ENCODE measurements at regions of chr20 and their contacts with region 1.

Region 1: DNA sequence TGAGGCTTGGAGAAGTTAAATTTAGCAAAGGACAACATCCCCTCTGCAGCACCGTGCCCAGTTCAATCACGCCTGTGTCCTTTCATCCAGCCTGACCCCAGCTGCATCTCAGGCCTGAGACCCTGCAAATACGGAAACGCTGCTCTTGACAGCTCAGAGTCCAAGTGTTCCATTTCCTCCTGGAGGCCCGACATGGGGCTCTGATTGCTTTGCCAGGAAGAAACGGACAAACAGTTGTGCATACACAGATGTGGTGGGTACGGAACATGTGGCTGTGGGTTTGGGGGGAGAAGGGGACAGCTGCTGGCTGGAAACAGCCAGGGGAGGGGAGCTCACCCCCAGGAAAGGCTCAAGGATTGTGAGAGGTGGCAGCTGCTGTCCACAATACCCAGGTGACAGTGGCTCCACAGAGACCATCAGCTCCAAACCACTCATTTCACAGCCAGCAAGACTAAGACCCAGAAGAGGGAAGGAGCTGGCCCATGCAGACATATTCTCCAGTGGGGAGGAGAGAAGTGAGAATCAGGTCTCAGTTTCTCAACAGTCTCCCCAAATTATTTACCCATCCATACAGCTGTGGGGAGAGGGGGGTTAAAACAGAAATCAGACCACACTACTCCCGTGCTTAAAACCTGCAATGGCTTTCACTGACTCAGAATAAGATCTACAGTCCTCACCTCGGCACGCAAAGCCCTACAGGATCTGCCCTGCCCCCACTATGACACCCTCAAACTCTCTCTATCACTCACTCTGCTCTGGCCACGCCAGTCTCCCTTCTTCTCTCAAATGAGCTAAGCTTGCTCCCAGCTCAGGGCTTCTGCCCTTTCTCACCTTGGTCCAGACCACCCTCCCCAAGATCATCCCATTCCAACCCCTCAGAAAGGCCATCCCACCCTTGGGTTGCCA is 89.1 kb downstream of the PREX1 start:
- DNase-seq: peak; percentile 92
- ATAC-seq: peak; percentile 83
- H3K4me3 ChIP-seq: peak overlapping the region; percentile 41; the same call in 1 of the 2 replicates
- H3K27ac ChIP-seq: peak overlapping the region; percentile 95
- H3K4me1 ChIP-seq: peaks cover 54% of the 10 kb centered on the region
- H3K27me3 ChIP-seq: no peaks in the 10 kb centered on the region
- CTCF ChIP-seq: no peak
- EP300 ChIP-seq: peak; percentile 99
- POLR2A ChIP-seq: no peak
- RAD21 ChIP-seq: peak; percentile 17; the same call in 1 of the 2 replicates

Region 2: DNA sequence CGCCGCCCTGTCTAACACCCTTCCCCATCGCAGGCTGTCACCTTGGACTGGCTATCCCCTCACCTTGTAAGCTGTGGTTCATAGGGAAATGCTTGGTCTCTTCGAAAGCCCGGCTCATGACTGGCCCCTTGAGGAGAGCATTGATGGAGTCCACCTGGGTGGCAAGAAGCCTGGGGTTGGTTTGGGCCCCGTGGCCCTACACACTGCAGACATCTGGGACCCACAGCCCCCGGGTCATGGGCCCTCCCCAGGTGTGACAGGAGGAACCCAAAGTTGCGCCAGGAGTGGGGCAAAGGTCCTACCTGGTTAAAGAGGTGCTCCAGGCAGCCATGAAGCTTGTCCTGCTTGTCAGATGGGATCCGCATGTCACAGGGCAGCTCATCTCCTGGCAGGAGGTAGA is 96.5 kb before region 1 on chr20:
- CTCF ChIA-PET with region 1: no interaction called
- POLR2A ChIA-PET with region 1: no interaction called
- RAD21 ChIA-PET with region 1: no interaction called
- SMC1A ChIA-PET with region 1: no interaction called
- in situ Hi-C with region 1: no loop called
- intact Hi-C with region 1: no loop called
- DNase-seq: no peak
- ATAC-seq: no peak
- H3K4me3 ChIP-seq: no peak overlapping the region
- H3K27ac ChIP-seq: no peak overlapping the region
- H3K4me1 ChIP-seq: no peaks in the 10 kb centered on the region
- H3K27me3 ChIP-seq: no peaks in the 10 kb centered on the region
- CTCF ChIP-seq: no peak
- EP300 ChIP-seq: no peak
- POLR2A ChIP-seq: no peak; the same call in 1 of the 2 replicates
- RAD21 ChIP-seq: no peak

Region 3: DNA sequence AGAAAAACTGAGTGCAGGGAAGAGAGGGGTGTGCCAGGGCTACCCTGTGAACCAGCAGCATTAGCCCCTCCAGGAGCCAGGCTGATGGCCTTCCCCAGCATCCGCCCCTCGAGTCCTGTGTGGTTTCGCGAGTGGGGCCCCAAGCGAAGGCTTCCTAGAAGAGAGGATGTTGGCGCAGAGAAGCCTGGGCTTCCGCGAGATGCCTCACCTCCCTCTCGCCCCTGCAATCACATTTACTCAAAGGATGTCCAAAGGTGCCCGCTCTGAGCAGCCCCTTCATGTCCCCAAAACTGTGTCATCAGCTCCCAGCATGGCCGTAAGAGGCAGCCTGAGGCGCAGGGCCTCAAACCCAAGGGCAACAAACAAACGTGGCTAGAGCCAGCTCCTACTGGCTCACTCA is 22.6 kb before region 1 on chr20:
- CTCF ChIA-PET with region 1: interaction called, 13 read pairs
- POLR2A ChIA-PET with region 1: interaction called, 7 read pairs
- RAD21 ChIA-PET with region 1: interaction called, 25 read pairs
- SMC1A ChIA-PET with region 1: interaction called, 141 read pairs
- in situ Hi-C with region 1: no loop called
- intact Hi-C with region 1: loop called (anchors 2 kb)
- DNase-seq: no peak
- ATAC-seq: no peak
- H3K4me3 ChIP-seq: no peak overlapping the region
- H3K27ac ChIP-seq: peak overlapping the region; percentile 87
- H3K4me1 ChIP-seq: peaks cover 84% of the 10 kb centered on the region
- H3K27me3 ChIP-seq: no peaks in the 10 kb centered on the region
- CTCF ChIP-seq: no peak
- EP300 ChIP-seq: no peak
- POLR2A ChIP-seq: no peak
- RAD21 ChIP-seq: no peak

Region 4: DNA sequence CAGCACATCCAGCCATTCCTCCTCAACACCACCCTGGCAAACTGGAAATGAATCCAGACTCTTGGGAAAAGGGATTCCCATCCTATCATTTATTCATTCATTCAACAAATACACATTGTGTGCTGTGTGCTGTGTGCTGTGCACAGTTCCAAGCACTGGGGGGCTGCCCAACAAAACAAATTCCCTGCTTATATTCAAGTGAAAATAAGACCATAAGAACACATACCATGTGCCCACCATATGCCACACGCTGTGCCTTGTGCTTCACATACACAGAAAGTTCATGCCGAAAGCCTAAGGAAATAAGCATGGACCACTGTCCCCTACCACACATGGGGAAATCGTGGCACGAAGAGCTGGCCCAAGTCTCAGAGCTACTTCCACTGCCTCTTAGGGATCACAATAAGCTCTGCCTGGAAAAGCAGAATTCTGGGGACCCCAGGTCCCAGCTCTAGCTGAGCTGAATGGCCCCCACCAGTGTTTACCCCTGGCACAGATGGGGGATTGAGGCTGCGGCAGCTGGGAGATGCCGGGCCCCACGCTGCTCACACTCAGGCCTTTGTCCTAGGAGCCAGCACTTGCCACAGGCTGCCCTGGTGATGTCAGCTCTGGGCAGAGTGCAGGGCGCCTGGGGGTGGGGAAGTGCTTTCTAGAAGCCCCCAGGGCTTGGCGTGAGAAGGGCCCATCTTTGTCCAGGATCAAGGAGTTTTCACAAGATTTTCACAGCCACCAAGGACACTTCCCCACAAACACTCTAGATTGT is 10.4 kb before region 1 on chr20:
- CTCF ChIA-PET with region 1: interaction called, 6 read pairs
- POLR2A ChIA-PET with region 1: interaction called, 3 read pairs
- RAD21 ChIA-PET with region 1: interaction called, 14 read pairs
- SMC1A ChIA-PET with region 1: interaction called, 141 read pairs
- in situ Hi-C with region 1: no loop called
- intact Hi-C with region 1: no loop called
- DNase-seq: no peak
- ATAC-seq: no peak
- H3K4me3 ChIP-seq: no peak overlapping the region
- H3K27ac ChIP-seq: no peak overlapping the region
- H3K4me1 ChIP-seq: peaks cover 12% of the 10 kb centered on the region
- H3K27me3 ChIP-seq: no peaks in the 10 kb centered on the region
- CTCF ChIP-seq: peak in 1 of 3 experiments; percentile 16; a peak in 1 of 6 replicates
- EP300 ChIP-seq: no peak
- POLR2A ChIP-seq: no peak
- RAD21 ChIP-seq: no peak

Region 5: GRCh38 chr20:48769069-48769879 is 30.6 kb after region 1 on chr20:
- CTCF ChIA-PET with region 1: interaction called, 4 read pairs
- POLR2A ChIA-PET with region 1: interaction called, 5 read pairs
- RAD21 ChIA-PET with region 1: interaction called, 15 read pairs
- SMC1A ChIA-PET with region 1: interaction called, 6 read pairs
- in situ Hi-C with region 1: no loop called
- intact Hi-C with region 1: no loop called
- DNase-seq: no peak
- ATAC-seq: peak; percentile 92
- H3K4me3 ChIP-seq: no peak overlapping the region
- H3K27ac ChIP-seq: peak overlapping the region; percentile 26; the same call in 1 of the 2 replicates
- H3K4me1 ChIP-seq: peaks cover 48% of the 10 kb centered on the region
- H3K27me3 ChIP-seq: no peaks in the 10 kb centered on the region
- CTCF ChIP-seq: no peak
- EP300 ChIP-seq: peak in 1 of 2 experiments; percentile 75; a peak in 2 of 4 replicates
- POLR2A ChIP-seq: peak; percentile 51
- RAD21 ChIP-seq: no peak

Region 6: GRCh38 chr20:48828022-48828743 is 89.5 kb after region 1 on chr20:
- CTCF ChIA-PET with region 1: interaction called, 5 read pairs
- POLR2A ChIA-PET with region 1: interaction called, 10 read pairs
- RAD21 ChIA-PET with region 1: interaction called, 25 read pairs
- SMC1A ChIA-PET with region 1: interaction called, 13 read pairs
- in situ Hi-C with region 1: no loop called
- intact Hi-C with region 1: loop called (anchors 1 kb)
- DNase-seq: no peak
- ATAC-seq: peak; percentile 53
- H3K4me3 ChIP-seq: peak overlapping the region; percentile 62
- H3K27ac ChIP-seq: peak overlapping the region; percentile 76
- H3K4me1 ChIP-seq: peaks cover 34% of the 10 kb centered on the region
- H3K27me3 ChIP-seq: no peaks in the 10 kb centered on the region
- CTCF ChIP-seq: peak in 1 of 3 experiments; percentile 8; a peak in 1 of 6 replicates
- EP300 ChIP-seq: no peak
- POLR2A ChIP-seq: peak; percentile 74
- RAD21 ChIP-seq: peak; percentile 21; the same call in 1 of the 2 replicates